PC-3 (cell line): ENCODE measurements at regions of chr10 and their contacts with region 1.

Region 1: GRCh38 chr10:74753442-74754211 is 72.8 kb upstream of the KAT6B start:
- DNase-seq: peak; percentile 100
- ATAC-seq: peak; percentile 86
- H3K4me3 ChIP-seq: peak overlapping the region; percentile 30
- H3K27ac ChIP-seq: peak overlapping the region; percentile 82
- H3K4me1 ChIP-seq: peaks cover 25% of the 10 kb centered on the region
- H3K27me3 ChIP-seq: no peaks in the 10 kb centered on the region
- CTCF ChIP-seq: peak; percentile 51

Region 2: DNA sequence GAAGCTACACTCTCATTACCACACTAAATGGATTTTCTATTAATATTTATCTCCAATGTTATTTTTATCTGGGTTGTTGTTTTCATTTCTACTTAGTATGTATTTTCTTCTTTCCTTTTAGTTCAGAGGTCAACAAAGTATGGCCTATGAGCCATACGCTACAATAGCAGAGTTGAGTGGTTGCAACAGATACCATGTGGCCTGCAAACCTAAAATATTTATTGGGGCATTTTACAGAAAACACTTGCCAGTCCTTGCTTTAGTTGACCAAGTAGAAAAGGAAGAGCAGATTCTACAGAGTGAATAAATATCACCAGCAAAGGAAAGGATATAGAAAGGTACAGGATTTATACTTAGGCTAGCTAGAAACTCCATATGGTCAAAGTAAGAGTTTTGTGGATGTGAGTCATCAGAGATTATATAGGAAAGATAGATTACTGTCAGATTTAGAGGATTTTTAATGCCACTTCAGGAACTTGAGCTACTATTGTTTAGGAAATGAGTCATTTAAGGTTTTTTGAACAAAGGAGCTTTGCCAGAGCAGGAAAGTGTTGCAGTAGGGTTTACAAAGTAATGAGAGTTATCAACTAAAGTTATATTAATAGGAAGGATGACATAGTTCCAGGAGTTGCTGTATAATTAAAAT is 250.5 kb before region 1 on chr10:
- CTCF ChIA-PET with region 1: no interaction called
- POLR2A ChIA-PET with region 1: interaction called, 4 read pairs
- intact Hi-C with region 1: loop called (anchors 1 kb)
- DNase-seq: peak; percentile 100
- ATAC-seq: peak; percentile 88
- H3K4me3 ChIP-seq: 0 out of 2 replicates have a peak overlapping the region, but pooled peaks have one; percentile 1
- H3K27ac ChIP-seq: peak overlapping the region; percentile 69
- H3K4me1 ChIP-seq: peaks cover 44% of the 10 kb centered on the region
- H3K27me3 ChIP-seq: no peaks in the 10 kb centered on the region
- CTCF ChIP-seq: no peak

Region 3: GRCh38 chr10:74598891-74599566 is 154.6 kb before region 1 on chr10:
- CTCF ChIA-PET with region 1: no interaction called
- POLR2A ChIA-PET with region 1: no interaction called
- intact Hi-C with region 1: loop called (anchors 1 kb)
- DNase-seq: peak; percentile 74
- ATAC-seq: peak; percentile 89
- H3K4me3 ChIP-seq: no peak overlapping the region
- H3K27ac ChIP-seq: no peak overlapping the region
- H3K4me1 ChIP-seq: peaks cover 12% of the 10 kb centered on the region
- H3K27me3 ChIP-seq: no peaks in the 10 kb centered on the region
- CTCF ChIP-seq: no peak

Region 4: GRCh38 chr10:74690393-74690792 is 63.2 kb before region 1 on chr10:
- CTCF ChIA-PET with region 1: no interaction called
- POLR2A ChIA-PET with region 1: no interaction called
- intact Hi-C with region 1: no loop called
- DNase-seq: no peak
- ATAC-seq: no peak
- H3K4me3 ChIP-seq: no peak overlapping the region
- H3K27ac ChIP-seq: no peak overlapping the region
- H3K4me1 ChIP-seq: no peaks in the 10 kb centered on the region
- H3K27me3 ChIP-seq: no peaks in the 10 kb centered on the region
- CTCF ChIP-seq: no peak

Region 5: GRCh38 chr10:74799721-74800221 is 46.1 kb after region 1 on chr10:
- CTCF ChIA-PET with region 1: no interaction called
- POLR2A ChIA-PET with region 1: no interaction called
- intact Hi-C with region 1: loop called (anchors 1 kb)
- DNase-seq: peak; percentile 100
- ATAC-seq: peak; percentile 97
- H3K4me3 ChIP-seq: peak overlapping the region; percentile 3; the same call in 1 of the 2 replicates
- H3K27ac ChIP-seq: peak overlapping the region; percentile 67
- H3K4me1 ChIP-seq: peaks cover 8% of the 10 kb centered on the region
- H3K27me3 ChIP-seq: no peaks in the 10 kb centered on the region
- CTCF ChIP-seq: no peak

Region 6: GRCh38 chr10:74947781-74948401 is 194.3 kb after region 1 on chr10:
- CTCF ChIA-PET with region 1: interaction called, 3 read pairs
- POLR2A ChIA-PET with region 1: no interaction called
- intact Hi-C with region 1: loop called (anchors 2 kb)
- DNase-seq: peak; percentile 99
- ATAC-seq: peak; percentile 87
- H3K4me3 ChIP-seq: no peak overlapping the region; the same call in 1 of the 2 replicates
- H3K27ac ChIP-seq: peak overlapping the region; percentile 54
- H3K4me1 ChIP-seq: peaks cover 43% of the 10 kb centered on the region
- H3K27me3 ChIP-seq: no peaks in the 10 kb centered on the region
- CTCF ChIP-seq: no peak

Region 7: GRCh38 chr10:75111367-75111906 is 357.8 kb after region 1 on chr10 and contains the start of gene SAMD8:
- CTCF ChIA-PET with region 1: no interaction called
- POLR2A ChIA-PET with region 1: no interaction called
- intact Hi-C with region 1: loop called (anchors 5 kb)
- DNase-seq: peak; percentile 100
- ATAC-seq: peak; percentile 84
- H3K4me3 ChIP-seq: peak within 1 kb of the TSS; percentile 74
- H3K27ac ChIP-seq: peak within 1 kb of the TSS; percentile 64
- H3K4me1 ChIP-seq: peaks cover 25% of the 10 kb centered on the region
- H3K27me3 ChIP-seq: no peaks in the 10 kb centered on the region
- CTCF ChIP-seq: peak; percentile 50
- total RNA-seq, gene SAMD8: 47.4 and 48.6 TPM in 2 replicates